Right ventricle myocardium superior (tissue), 1 donor: ENCODE measurements at regions of chr9 and their contacts with region 1.

Region 1: GRCh38 chr9:130701056-130702022 is 7.8 kb downstream of the EXOSC2 start:
- DNase-seq: peak; percentile 84
- ATAC-seq: peak; percentile 96

Region 2: GRCh38 chr9:130997925-130998596 is 296.7 kb after region 1 on chr9:
- intact Hi-C with region 1: loop called (anchors 5 kb)
- DNase-seq: peak; percentile 82
- ATAC-seq: peak; percentile 92